ENCODE measurements at regions of chr11 and their contacts with region 1.

Region 1: DNA sequence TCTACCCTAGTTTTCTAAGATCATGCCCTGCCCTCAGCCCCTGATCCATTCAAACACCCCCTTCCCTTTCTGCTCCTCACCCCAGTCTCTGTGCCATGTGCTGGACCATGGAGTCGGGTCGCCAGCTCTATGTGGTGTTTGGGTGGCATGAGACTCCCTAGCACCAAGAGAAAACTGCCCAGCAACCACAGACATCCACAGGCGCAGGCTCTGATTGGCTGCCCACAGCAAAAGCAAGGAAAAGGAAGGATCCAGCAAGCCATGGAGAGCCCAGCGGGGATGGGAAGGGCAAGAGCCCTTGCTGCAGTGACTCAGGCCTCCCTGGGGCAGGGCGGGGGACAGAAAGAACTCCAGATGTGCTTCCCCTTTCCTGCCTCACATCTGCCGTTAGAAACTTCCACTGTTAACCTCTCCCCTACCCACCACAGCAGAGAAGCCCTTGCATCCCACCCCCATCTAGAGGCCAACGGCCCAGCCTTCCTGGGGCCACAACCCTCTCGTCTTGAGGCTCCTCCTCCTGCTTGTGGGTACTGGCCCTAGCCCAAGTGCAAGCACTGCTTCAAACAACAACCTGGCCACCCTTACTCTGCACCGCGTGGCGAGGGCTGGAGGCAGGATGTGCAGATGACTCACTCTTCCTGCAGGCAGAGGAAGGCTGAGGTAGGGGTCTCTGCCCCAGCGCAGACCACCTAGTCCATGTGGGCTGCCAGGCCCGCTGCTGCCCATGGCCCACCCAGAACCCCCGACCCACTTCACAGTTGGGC is 9.7 kb upstream of the AHNAK start:
- DNase-seq: peak; percentile 95
- ATAC-seq: peak; percentile 57
- H3K4me3 ChIP-seq: peak overlapping the region; percentile 3; the same call in 1 of the 2 replicates
- H3K27ac ChIP-seq: peak overlapping the region; percentile 78
- H3K4me1 ChIP-seq: peaks cover 40% of the 10 kb centered on the region
- H3K27me3 ChIP-seq: no peaks in the 10 kb centered on the region
- CTCF ChIP-seq: no peak
- POLR2A ChIP-seq: no peak
- RAD21 ChIP-seq: no peak; the same call in 1 of the 2 replicates

Region 2: GRCh38 chr11:62394825-62395538 is 161.3 kb before region 1 on chr11:
- CTCF ChIA-PET with region 1: interaction called, 8 read pairs
- POLR2A ChIA-PET with region 1: interaction called, 3 read pairs
- dilution Hi-C with region 1: no loop called
- in situ Hi-C with region 1: loop called (anchors 5 kb)
- intact Hi-C with region 1: loop called (anchors 1 kb)
- DNase-seq: peak; percentile 80
- ATAC-seq: peak; percentile 86
- H3K4me3 ChIP-seq: peak overlapping the region; percentile 36
- H3K27ac ChIP-seq: peak overlapping the region; percentile 54
- H3K4me1 ChIP-seq: peaks cover 15% of the 10 kb centered on the region; the same call in 1 of the 2 replicates
- H3K27me3 ChIP-seq: peaks cover 2% of the 10 kb centered on the region; the same call in 1 of the 2 replicates
- CTCF ChIP-seq: peak; percentile 80
- POLR2A ChIP-seq: no peak
- RAD21 ChIP-seq: peak; percentile 88

Region 3: GRCh38 chr11:62421996-62422395 is 134.3 kb before region 1 on chr11:
- CTCF ChIA-PET with region 1: interaction called, 13 read pairs
- POLR2A ChIA-PET with region 1: no interaction called
- dilution Hi-C with region 1: no loop called
- in situ Hi-C with region 1: loop called (anchors 5 kb)
- intact Hi-C with region 1: loop called (anchors 1 kb)
- DNase-seq: no peak
- ATAC-seq: no peak
- H3K4me3 ChIP-seq: no peak overlapping the region
- H3K27ac ChIP-seq: no peak overlapping the region
- H3K4me1 ChIP-seq: peaks cover 13% of the 10 kb centered on the region
- H3K27me3 ChIP-seq: no peaks in the 10 kb centered on the region
- CTCF ChIP-seq: no peak
- POLR2A ChIP-seq: no peak
- RAD21 ChIP-seq: no peak

Region 4: GRCh38 chr11:62580959-62581715 is 24.8 kb after region 1 on chr11:
- CTCF ChIA-PET with region 1: no interaction called
- POLR2A ChIA-PET with region 1: no interaction called
- dilution Hi-C with region 1: no loop called
- in situ Hi-C with region 1: no loop called
- intact Hi-C with region 1: no loop called
- DNase-seq: no peak
- ATAC-seq: no peak
- H3K4me3 ChIP-seq: no peak overlapping the region
- H3K27ac ChIP-seq: no peak overlapping the region
- H3K4me1 ChIP-seq: no peaks in the 10 kb centered on the region
- H3K27me3 ChIP-seq: no peaks in the 10 kb centered on the region
- CTCF ChIP-seq: no peak
- POLR2A ChIP-seq: no peak
- RAD21 ChIP-seq: no peak

Measured in IMR-90 (cell line).